BJ (cell line): ENCODE measurements at regions of chr16 and their contacts with region 1.

Region 1: DNA sequence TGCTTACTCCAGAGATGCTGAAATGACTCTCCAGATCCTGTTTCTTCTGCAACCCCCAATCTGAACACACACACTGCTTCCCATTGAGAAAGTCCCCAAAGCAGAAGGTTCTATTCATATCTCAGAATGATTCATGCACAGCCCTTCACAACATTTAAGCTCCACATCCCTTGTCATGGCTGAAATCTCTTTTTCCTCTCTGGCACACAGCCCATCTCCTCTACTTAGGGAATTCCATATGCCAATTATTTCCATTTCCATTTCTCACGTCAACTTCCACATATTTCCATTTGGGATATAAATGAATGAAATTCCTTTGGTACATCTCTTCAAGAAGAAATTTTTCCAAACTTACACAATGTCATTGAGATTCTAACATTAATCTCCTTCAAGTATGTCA is 119.6 kb downstream of the CDH11 start:
- DNase-seq: no peak
- H3K4me3 ChIP-seq: no peak overlapping the region
- H3K27me3 ChIP-seq: no peaks in the 10 kb centered on the region
- CTCF ChIP-seq: no peak

Region 2: GRCh38 chr16:66335704-66336329 is 1333.6 kb after region 1 on chr16:
- CTCF ChIA-PET with region 1: no interaction called
- POLR2A ChIA-PET with region 1: interaction called, 13 read pairs
- DNase-seq: no peak
- H3K4me3 ChIP-seq: no peak overlapping the region
- H3K27me3 ChIP-seq: peaks cover 21% of the 10 kb centered on the region
- CTCF ChIP-seq: no peak